ENCODE measurements at regions of chr14 and their contacts with region 1.

Region 1: GRCh38 chr14:54347997-54348611 is 48.7 kb upstream of the CDKN3 start:
- DNase-seq: peak; percentile 51 to 62
- ATAC-seq: peak; percentile 80 to 89
- H3K4me3 ChIP-seq: no peak overlapping the region
- H3K27ac ChIP-seq: no peak overlapping the region
- H3K4me1 ChIP-seq: no peaks in the 10 kb centered on the region
- CTCF ChIP-seq: peak; percentile 88
- EP300 ChIP-seq: no peak
- POLR2A ChIP-seq: no peak
- RAD21 ChIP-seq: peak; percentile 89 to 92

Region 2: GRCh38 chr14:53295985-53296582 is 1052.0 kb before region 1 on chr14:
- CTCF ChIA-PET with region 1: interaction called, 19 read pairs
- POLR2A ChIA-PET with region 1: no interaction called
- DNase-seq: peak; percentile 9 to 39
- ATAC-seq: peak in 1 of 2 experiments; percentile 50; a peak in 1 of 6 replicates
- H3K4me3 ChIP-seq: no peak overlapping the region
- H3K27ac ChIP-seq: no peak overlapping the region
- H3K4me1 ChIP-seq: no peaks in the 10 kb centered on the region
- CTCF ChIP-seq: peak; percentile 85
- EP300 ChIP-seq: no peak
- POLR2A ChIP-seq: no peak
- RAD21 ChIP-seq: peak; percentile 30 to 44; a peak in 4 of 5 replicates

Region 3: DNA sequence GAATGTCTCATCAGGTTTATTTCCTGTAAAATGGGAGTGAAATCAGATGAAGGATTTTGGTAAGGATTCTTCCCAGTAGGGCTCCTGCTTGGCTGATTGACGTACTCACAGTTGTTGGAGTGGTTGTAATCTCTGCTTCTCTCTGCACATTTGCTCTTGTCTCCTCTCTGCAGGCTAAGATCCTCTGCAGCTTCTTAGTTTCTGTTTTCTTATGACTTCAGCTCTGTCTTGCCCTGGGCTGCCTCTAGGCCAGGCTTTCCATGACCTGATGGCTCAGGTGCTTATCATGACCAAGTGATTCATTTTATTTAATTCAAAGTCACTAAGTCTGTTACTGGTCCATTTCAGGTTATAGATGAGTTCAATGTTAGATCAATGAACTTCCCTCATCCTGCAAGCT is 800.5 kb before region 1 on chr14:
- CTCF ChIA-PET with region 1: interaction called, 10 read pairs
- POLR2A ChIA-PET with region 1: no interaction called
- DNase-seq: no peak
- ATAC-seq: no peak
- H3K4me3 ChIP-seq: no peak overlapping the region
- H3K27ac ChIP-seq: no peak overlapping the region
- H3K4me1 ChIP-seq: peaks cover 5% of the 10 kb centered on the region; the same call in 2 of the 3 replicates
- CTCF ChIP-seq: no peak
- EP300 ChIP-seq: no peak
- POLR2A ChIP-seq: no peak
- RAD21 ChIP-seq: no peak

Region 4: DNA sequence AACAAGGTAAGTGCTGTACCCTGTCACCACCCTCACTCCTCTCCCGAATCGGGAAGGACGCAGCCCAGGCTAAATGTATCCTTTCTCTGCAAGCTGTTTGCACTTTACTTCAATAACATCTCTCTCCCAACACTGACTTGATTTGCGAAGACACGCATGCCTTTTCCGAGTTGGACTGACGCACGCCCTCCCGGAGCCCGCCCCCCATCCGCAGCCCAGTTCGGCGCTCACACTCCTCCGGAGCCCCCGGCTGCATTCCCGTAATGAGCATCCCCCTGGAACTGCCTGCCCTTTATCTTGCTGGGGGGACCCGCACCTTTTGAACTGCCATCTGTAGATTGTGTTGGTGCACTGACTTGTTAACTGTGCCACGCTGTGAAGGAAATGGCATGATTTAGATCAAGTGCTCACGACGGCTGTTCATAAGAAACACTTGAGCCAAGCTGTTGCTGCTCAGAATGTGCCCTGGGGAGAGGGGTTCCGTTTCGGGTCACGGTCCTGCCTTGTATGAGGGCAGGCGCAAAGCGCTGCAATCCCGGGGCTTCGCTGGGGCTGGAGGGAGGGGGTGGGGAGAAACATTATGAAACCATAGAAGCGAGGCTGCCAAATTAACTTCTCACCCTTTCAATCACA is 127.9 kb before region 1 on chr14:
- CTCF ChIA-PET with region 1: no interaction called
- POLR2A ChIA-PET with region 1: no interaction called
- DNase-seq: no peak
- ATAC-seq: no peak
- H3K4me3 ChIP-seq: no peak overlapping the region
- H3K27ac ChIP-seq: no peak overlapping the region
- H3K4me1 ChIP-seq: no peaks in the 10 kb centered on the region
- CTCF ChIP-seq: no peak
- EP300 ChIP-seq: no peak
- POLR2A ChIP-seq: no peak
- RAD21 ChIP-seq: no peak

Region 5: GRCh38 chr14:54317391-54317790 is 30.7 kb before region 1 on chr14:
- CTCF ChIA-PET with region 1: interaction called, 10 read pairs
- POLR2A ChIA-PET with region 1: no interaction called
- DNase-seq: no peak
- ATAC-seq: no peak
- H3K4me3 ChIP-seq: no peak overlapping the region
- H3K27ac ChIP-seq: no peak overlapping the region
- H3K4me1 ChIP-seq: peaks cover 3% of the 10 kb centered on the region; the same call in 2 of the 3 replicates
- CTCF ChIP-seq: no peak
- EP300 ChIP-seq: no peak
- POLR2A ChIP-seq: no peak
- RAD21 ChIP-seq: no peak

Region 6: GRCh38 chr14:54329082-54329695 is 18.9 kb before region 1 on chr14:
- CTCF ChIA-PET with region 1: interaction called, 16 read pairs
- POLR2A ChIA-PET with region 1: no interaction called
- DNase-seq: peak; percentile 60 to 70
- ATAC-seq: peak; percentile 85 to 96
- H3K4me3 ChIP-seq: no peak overlapping the region
- H3K27ac ChIP-seq: no peak overlapping the region
- H3K4me1 ChIP-seq: no peaks in the 10 kb centered on the region
- CTCF ChIP-seq: peak; percentile 68
- EP300 ChIP-seq: no peak
- POLR2A ChIP-seq: no peak
- RAD21 ChIP-seq: peak; percentile 79 to 82

Region 7: GRCh38 chr14:54627540-54628363 is 279.6 kb after region 1 on chr14:
- CTCF ChIA-PET with region 1: no interaction called
- POLR2A ChIA-PET with region 1: no interaction called
- DNase-seq: no peak
- ATAC-seq: no peak
- H3K4me3 ChIP-seq: no peak overlapping the region
- H3K27ac ChIP-seq: no peak overlapping the region
- H3K4me1 ChIP-seq: peaks cover 16% of the 10 kb centered on the region; the same call in 2 of the 3 replicates
- CTCF ChIP-seq: no peak
- EP300 ChIP-seq: no peak
- POLR2A ChIP-seq: no peak
- RAD21 ChIP-seq: no peak